Sigmoid colon (tissue), 7 donors: ENCODE measurements at regions of chr9 and their contacts with region 1.

Region 1: DNA sequence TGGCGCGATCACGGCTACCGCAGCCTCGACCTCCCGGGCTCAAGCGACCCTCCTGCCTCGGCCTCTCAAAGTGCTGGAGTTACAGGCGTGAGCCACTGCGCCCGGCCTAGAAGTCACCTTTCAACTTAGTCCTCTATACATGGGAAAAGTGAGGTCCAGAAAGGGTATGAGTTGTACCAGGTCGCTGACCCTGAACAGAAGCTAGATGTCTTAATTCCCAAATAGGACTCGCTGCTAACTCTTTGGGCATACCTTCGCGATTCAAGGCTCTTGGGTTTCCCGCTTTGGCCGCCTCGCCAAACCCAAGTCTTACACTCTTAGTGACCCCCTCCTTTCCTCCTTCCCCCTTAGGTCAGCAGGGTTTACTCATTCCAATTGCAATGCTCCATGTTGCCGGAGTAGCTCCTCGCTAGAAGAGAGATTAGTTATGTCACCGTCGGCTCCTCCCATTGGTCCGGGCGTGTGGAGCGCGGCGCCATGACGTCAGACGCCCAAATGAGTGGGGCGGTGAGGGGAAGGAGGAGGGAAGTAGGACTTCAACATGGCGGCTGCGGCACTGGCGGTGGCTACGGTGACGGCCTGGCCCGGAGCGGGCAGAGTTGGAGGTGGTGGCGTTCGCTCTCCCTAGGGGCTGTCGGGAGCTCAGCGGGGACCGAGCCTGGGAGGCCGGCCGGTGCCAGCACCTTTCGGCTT is at the start of gene UBAP1:
- DNase-seq: peak; percentile 99
- H3K4me3 ChIP-seq: peak within 1 kb of the TSS; percentile 71 to 92 (median 84)
- H3K27ac ChIP-seq: peak within 1 kb of the TSS; percentile 92 to 96 (median 94)
- H3K4me1 ChIP-seq: peaks cover 0 to 18% (median 11%) of the 10 kb centered on the region in 4 donors
- H3K27me3 ChIP-seq: no peaks in the 10 kb centered on the region
- CTCF ChIP-seq: peak in 1 of 4 experiments; percentile 11
- EP300 ChIP-seq: no peak
- POLR2A ChIP-seq: peak; percentile 81 to 82
- total RNA-seq, gene UBAP1: 42.5 to 52.7 (median 44.3) TPM

Region 2: GRCh38 chr9:34048923-34049697 is 129.6 kb before region 1 on chr9:
- intact Hi-C with region 1: loop called (anchors 5 kb)
- DNase-seq: peak; percentile 99
- H3K4me3 ChIP-seq: peak overlapping the region; percentile 58 to 99 (median 84)
- H3K27ac ChIP-seq: peak overlapping the region; percentile 84 to 95 (median 92)
- H3K4me1 ChIP-seq: peaks cover 0 to 28% (median 17%) of the 10 kb centered on the region in 4 donors
- H3K27me3 ChIP-seq: no peaks in the 10 kb centered on the region
- CTCF ChIP-seq: no peak
- EP300 ChIP-seq: peak in 1 of 4 donors; percentile 39
- POLR2A ChIP-seq: no peak

Region 3: GRCh38 chr9:34126207-34127034 is 52.2 kb before region 1 on chr9 and contains the start of gene DCAF12:
- intact Hi-C with region 1: loop called (anchors 2 kb)
- DNase-seq: peak; percentile 95
- H3K4me3 ChIP-seq: peak within 1 kb of the TSS; percentile 59 to 88 (median 80)
- H3K27ac ChIP-seq: peak within 1 kb of the TSS; percentile 81 to 91 (median 89)
- H3K4me1 ChIP-seq: peaks cover 0 to 46% (median 40%) of the 10 kb centered on the region in 4 donors
- H3K27me3 ChIP-seq: no peaks in the 10 kb centered on the region
- CTCF ChIP-seq: no peak
- EP300 ChIP-seq: peak in 1 of 4 donors; percentile 31
- POLR2A ChIP-seq: peak; percentile 62 to 71
- total RNA-seq, gene DCAF12: 14.3 to 25.2 (median 20.2) TPM

Region 4: DNA sequence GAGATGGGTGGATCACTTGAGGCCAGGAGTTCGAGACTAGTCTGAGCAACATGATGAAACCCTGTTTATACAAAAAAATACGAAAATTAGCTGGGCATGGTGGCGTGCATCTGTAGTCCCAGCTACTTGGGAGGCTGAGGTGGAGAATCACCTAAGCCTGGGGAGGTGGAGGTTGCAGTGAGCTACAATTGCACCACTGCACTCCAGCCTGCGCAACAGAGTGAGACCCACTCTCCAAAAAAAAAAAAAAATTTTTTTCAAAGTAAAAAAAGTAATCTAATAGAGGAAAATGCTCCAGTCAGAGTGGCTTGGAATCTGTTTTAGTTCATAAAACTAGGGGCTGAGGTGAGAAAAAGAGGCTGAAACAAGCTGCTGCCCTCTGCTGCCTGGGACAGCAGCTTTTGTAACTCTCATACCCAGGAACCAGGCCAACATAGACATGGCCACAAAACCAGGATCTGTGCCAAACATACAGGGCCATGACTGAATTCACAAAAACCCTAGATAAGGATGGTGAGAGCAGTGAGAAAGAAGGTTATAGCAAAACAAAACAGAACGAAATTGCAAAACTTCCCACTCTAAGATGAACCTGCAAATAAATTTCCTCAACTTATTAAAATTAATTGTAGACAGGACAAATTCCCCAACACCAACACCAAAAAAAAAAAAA is 39.1 kb before region 1 on chr9:
- intact Hi-C with region 1: no loop called
- DNase-seq: no peak
- H3K4me3 ChIP-seq: no peak overlapping the region
- H3K27ac ChIP-seq: no peak overlapping the region
- H3K4me1 ChIP-seq: no peaks in the 10 kb centered on the region
- H3K27me3 ChIP-seq: no peaks in the 10 kb centered on the region
- CTCF ChIP-seq: no peak
- EP300 ChIP-seq: no peak
- POLR2A ChIP-seq: no peak

Region 5: DNA sequence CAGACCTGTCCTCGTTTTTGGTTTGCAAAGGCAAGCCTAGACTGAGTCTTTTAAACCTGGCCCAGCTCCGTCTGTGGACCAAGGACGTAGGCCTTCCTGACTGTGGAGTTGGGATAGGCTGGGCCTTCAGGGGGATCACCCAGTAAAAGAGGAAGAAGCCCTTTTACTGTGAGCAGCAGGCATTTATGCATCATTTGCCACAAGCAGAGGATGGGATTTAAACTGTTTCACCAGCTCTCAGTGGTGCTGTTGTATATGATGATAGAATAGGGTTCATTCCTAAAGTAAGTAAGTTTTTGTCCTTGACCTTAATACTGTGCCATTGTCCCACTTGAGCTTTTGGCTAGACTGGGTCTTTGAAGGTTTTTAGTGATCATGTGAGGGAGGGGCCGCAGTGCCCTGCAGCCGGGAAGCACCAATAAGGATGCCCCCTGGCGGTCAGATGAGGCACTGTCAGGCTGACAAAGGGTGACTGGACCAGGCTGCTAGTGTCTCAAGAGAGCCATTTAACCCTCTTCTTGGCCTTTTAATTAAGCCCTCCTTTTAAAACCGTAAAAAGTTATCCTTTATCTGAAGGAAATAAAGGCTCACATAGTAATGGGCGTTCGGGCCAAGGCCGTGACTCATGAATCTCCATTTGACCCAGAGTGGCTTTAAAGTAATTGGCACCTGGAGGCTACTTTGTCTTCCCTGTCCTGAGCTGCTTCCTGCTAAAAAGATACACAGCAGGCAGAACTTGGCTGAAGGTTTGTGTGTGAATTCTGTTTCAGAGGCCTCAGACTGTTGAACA is 74.2 kb after region 1 on chr9:
- intact Hi-C with region 1: loop called (anchors 2 kb)
- DNase-seq: peak; percentile 80
- H3K4me3 ChIP-seq: no peak overlapping the region
- H3K27ac ChIP-seq: peak overlapping the region; percentile 63 to 84 (median 78)
- H3K4me1 ChIP-seq: peaks cover 0 to 54% (median 45%) of the 10 kb centered on the region in 4 donors
- H3K27me3 ChIP-seq: no peaks in the 10 kb centered on the region
- CTCF ChIP-seq: peak; percentile 23 to 97 (median 92)
- EP300 ChIP-seq: no peak
- POLR2A ChIP-seq: no peak